ENCODE measurements at regions of chr7 and their contacts with region 1.

Region 1: GRCh38 chr7:100538654-100539435 is at the start of gene AGFG2:
- DNase-seq: peak; percentile 100
- H3K4me3 ChIP-seq: peak within 1 kb of the TSS; percentile 89
- H3K4me3 Mint-ChIP-seq: peak within 1 kb of the TSS; percentile 87
- H3K27ac Mint-ChIP-seq: peak within 1 kb of the TSS; percentile 72
- H3K4me1 ChIP-seq: peaks cover 37% of the 10 kb centered on the region
- H3K4me1 Mint-ChIP-seq: peaks cover 22% of the 10 kb centered on the region
- H3K27me3 ChIP-seq: no peaks in the 10 kb centered on the region
- H3K27me3 Mint-ChIP-seq: no peaks in the 10 kb centered on the region
- CTCF ChIP-seq: no peak
- total RNA-seq, gene AGFG2: 58.5 and 60.7 TPM in 2 replicates

Region 2: DNA sequence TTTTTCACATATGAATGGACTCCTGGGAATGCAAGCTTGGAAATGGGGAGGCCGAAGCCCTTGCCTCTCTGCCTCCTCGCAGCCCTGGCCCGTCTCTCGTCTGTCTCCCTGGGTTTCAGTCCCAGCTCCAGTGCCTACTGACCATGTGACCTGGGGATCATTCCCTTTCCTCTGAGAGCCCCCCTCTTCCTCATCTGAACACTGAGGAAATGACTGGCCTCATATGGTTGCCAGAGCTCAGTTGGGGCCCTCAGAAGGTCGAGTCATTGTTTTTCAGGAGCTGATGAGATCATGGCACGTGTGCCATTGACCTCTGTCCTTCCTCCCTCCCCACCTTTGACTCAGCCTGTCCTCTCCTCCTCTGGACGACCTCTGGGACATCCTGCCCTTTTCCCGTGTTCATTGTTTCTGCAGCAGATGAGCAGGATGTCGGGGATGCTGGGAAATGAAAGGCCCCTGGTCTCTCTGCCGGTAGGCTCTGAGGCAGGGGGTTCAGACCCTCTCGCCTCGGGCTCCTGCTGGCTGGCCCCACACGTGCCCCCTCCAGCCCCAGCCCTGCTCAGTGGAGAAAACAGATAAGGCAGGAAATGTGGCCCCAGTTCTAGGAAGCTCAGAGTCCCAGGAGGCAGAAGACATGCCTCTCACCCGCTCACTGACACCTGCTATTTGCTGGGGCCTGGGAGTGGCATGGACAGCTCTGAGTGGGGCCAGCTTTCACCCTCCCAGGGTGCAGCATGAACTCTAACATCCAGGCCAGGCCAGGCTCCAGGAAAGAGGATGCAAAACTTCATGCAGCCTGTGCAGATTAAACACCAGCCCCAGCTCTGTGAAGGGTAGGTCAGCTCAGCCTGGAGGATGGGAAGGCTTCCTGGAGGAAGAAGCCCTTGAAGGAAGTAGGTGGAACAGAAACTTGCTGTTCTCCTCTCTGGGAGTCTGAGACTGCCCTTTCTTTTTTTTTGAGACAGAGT is 94.2 kb before region 1 on chr7:
- CTCF ChIA-PET with region 1: interaction called, 17 read pairs
- POLR2A ChIA-PET with region 1: no interaction called
- intact Hi-C with region 1: no loop called
- DNase-seq: no peak
- H3K4me3 ChIP-seq: no peak overlapping the region
- H3K4me3 Mint-ChIP-seq: no peak overlapping the region
- H3K27ac Mint-ChIP-seq: peak overlapping the region; percentile 37
- H3K4me1 ChIP-seq: peaks cover 13% of the 10 kb centered on the region
- H3K4me1 Mint-ChIP-seq: no peaks in the 10 kb centered on the region
- H3K27me3 ChIP-seq: no peaks in the 10 kb centered on the region
- H3K27me3 Mint-ChIP-seq: no peaks in the 10 kb centered on the region
- CTCF ChIP-seq: no peak

Region 3: GRCh38 chr7:100489824-100490223 is 49.0 kb before region 1 on chr7:
- CTCF ChIA-PET with region 1: no interaction called
- POLR2A ChIA-PET with region 1: no interaction called
- intact Hi-C with region 1: no loop called
- DNase-seq: peak; percentile 80 to 83
- H3K4me3 ChIP-seq: no peak overlapping the region
- H3K4me3 Mint-ChIP-seq: no peak overlapping the region
- H3K27ac Mint-ChIP-seq: peak overlapping the region; percentile 26
- H3K4me1 ChIP-seq: no peaks in the 10 kb centered on the region
- H3K4me1 Mint-ChIP-seq: peaks cover 7% of the 10 kb centered on the region
- H3K27me3 ChIP-seq: no peaks in the 10 kb centered on the region
- H3K27me3 Mint-ChIP-seq: no peaks in the 10 kb centered on the region
- CTCF ChIP-seq: no peak

Region 4: DNA sequence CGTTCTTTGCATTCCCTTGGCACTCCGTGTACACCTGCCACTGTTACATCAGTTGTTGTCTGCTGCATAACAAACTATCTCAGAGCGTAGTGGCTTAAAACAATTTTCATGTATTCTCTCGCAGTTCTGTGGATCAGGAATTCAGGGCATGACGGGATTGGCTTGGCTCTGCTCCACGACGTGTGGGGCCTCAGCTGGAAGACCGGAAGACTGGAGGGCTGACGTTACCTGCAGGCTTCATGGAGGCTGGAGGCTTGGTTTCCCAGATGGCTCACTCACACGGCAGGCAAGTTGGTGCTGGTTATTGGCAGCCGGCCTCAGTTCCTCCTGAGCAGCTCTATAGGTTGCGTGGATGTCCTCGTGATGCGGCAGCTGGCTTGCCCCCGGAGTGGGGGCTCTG is 29.6 kb before region 1 on chr7:
- CTCF ChIA-PET with region 1: no interaction called
- POLR2A ChIA-PET with region 1: no interaction called
- intact Hi-C with region 1: no loop called
- DNase-seq: no peak
- H3K4me3 ChIP-seq: no peak overlapping the region
- H3K4me3 Mint-ChIP-seq: no peak overlapping the region
- H3K27ac Mint-ChIP-seq: no peak overlapping the region
- H3K4me1 ChIP-seq: peaks cover 14% of the 10 kb centered on the region
- H3K4me1 Mint-ChIP-seq: peaks cover 10% of the 10 kb centered on the region
- H3K27me3 ChIP-seq: no peaks in the 10 kb centered on the region
- H3K27me3 Mint-ChIP-seq: no peaks in the 10 kb centered on the region
- CTCF ChIP-seq: no peak